ENCODE measurements at regions of chr17 and their contacts with region 1.

Region 1: GRCh38 chr17:79970576-79971068 is 65.0 kb downstream of the TBC1D16 start:
- H3K4me3 ChIP-seq: no peak overlapping the region
- H3K27ac ChIP-seq: no peak overlapping the region
- H3K4me1 ChIP-seq: no peaks in the 10 kb centered on the region
- CTCF ChIP-seq: peak; percentile 69

Region 2: GRCh38 chr17:79789534-79790353 is 180.9 kb before region 1 on chr17:
- CTCF ChIA-PET with region 1: interaction called, 12 read pairs
- POLR2A ChIA-PET with region 1: interaction called, 3 read pairs
- H3K4me3 ChIP-seq: no peak overlapping the region
- H3K27ac ChIP-seq: no peak overlapping the region; the same call in 1 of the 2 replicates
- H3K4me1 ChIP-seq: peaks cover 12% of the 10 kb centered on the region
- CTCF ChIP-seq: no peak

Region 3: DNA sequence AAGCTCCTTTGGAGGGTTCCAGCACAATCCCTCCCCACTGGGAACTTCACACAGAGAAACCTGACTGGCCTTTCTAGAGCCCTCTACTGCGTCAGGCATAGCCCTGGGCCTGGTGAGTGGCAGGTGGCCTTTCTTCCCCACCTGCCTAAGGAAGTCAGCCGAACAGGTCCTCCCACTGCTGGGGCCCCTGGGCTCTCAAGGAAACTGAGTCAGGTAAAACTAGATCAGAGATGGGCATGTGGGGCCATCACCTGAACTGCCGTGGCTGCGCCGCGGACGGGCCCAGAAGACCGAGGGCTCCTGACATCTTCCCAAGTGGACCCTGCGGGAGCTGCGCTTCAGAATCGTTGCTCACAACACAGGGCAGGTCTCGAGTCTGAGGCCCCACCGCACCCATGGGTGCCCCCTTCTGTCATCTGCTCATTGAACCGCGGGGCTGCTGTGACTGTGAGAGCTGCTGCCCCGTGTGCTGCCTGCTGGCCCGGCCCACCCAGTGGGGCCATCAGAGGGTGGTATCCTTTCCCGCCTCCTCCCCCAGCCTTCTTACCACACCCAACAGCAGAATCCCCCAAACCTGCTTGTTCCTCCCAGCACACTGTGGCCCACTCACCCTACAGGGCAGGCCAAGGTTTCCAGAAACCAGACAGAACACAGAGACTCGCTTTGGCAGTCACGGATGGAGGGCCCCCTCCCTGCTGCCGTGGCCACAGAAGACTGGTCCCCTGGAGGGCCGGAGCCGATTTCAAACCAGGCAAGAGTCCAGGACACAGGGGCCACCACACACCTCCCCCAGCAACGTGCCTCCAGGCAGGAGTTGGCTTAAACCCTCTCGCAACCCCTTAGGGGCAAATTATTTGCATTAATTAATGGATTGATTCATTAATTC is 16.1 kb before region 1 on chr17:
- CTCF ChIA-PET with region 1: interaction called, 43 read pairs
- POLR2A ChIA-PET with region 1: no interaction called
- H3K4me3 ChIP-seq: no peak overlapping the region
- H3K27ac ChIP-seq: no peak overlapping the region
- H3K4me1 ChIP-seq: no peaks in the 10 kb centered on the region; the same call in 1 of the 2 replicates
- CTCF ChIP-seq: no peak

Region 4: GRCh38 chr17:79991140-79991923 is 20.7 kb after region 1 on chr17:
- CTCF ChIA-PET with region 1: interaction called, 18 read pairs
- POLR2A ChIA-PET with region 1: no interaction called
- H3K4me3 ChIP-seq: no peak overlapping the region
- H3K27ac ChIP-seq: peak overlapping the region; percentile 85; the same call in 1 of the 2 replicates
- H3K4me1 ChIP-seq: peaks cover 36% of the 10 kb centered on the region
- CTCF ChIP-seq: no peak

Region 5: GRCh38 chr17:80035943-80036714 is 65.5 kb after region 1 on chr17 and contains the start of gene CCDC40:
- CTCF ChIA-PET with region 1: no interaction called
- POLR2A ChIA-PET with region 1: no interaction called
- H3K4me3 ChIP-seq: peak within 1 kb of the TSS; percentile 70
- H3K27ac ChIP-seq: peak within 1 kb of the TSS; percentile 72; the same call in 1 of the 2 replicates
- H3K4me1 ChIP-seq: no peaks in the 10 kb centered on the region
- CTCF ChIP-seq: peak; percentile 45; the same call in 1 of the 2 replicates